ENCODE measurements at regions of chr2 and their contacts with region 1.

Region 1: DNA sequence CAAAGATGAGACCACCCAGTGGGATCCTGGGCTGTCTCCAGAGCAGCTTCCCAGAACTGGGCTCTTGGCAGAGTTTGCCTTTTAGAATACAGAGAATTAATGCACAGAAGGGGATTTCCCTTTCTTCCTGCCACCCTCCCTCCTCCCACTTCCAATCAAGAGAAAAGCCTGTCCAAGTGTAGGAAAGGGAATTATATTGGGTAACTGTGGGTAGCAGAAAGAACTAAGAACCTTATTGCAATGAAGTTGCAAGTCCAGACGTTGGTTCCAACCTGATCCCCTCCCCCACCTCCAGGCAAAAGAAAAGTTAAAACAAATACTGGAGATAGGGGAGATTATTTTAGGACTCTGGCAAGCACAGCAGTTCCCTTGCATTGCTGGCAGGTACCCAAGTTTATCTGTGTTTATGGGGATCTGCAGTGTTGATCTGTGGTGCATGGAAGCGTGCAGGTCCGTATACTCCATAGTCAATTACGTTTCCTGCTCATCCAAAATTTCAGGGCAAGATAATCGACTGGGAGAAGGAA is 114.3 kb downstream of the PRKCE start:
- DNase-seq: no peak
- H3K4me3 ChIP-seq: no peak overlapping the region
- H3K27ac ChIP-seq: peak overlapping the region in 1 of 4 donors; percentile 7
- H3K4me1 ChIP-seq: peaks cover 27 to 36% (median 31%) of the 10 kb centered on the region in 4 donors
- H3K27me3 ChIP-seq: no peaks in the 10 kb centered on the region
- CTCF ChIP-seq: no peak
- EP300 ChIP-seq: no peak
- POLR2A ChIP-seq: no peak

Region 2: GRCh38 chr2:45706033-45706432 is 59.8 kb before region 1 on chr2:
- intact Hi-C with region 1: loop called (anchors 5 kb)
- DNase-seq: no peak
- H3K4me3 ChIP-seq: no peak overlapping the region
- H3K27ac ChIP-seq: peak overlapping the region; percentile 38 to 70 (median 59)
- H3K4me1 ChIP-seq: peaks cover 21 to 64% (median 54%) of the 10 kb centered on the region in 4 donors
- H3K27me3 ChIP-seq: no peaks in the 10 kb centered on the region
- CTCF ChIP-seq: no peak
- EP300 ChIP-seq: no peak
- POLR2A ChIP-seq: no peak

Measured in esophagus muscularis mucosa (tissue), 4 donors.